Heart right ventricle (tissue), 16 donors: ENCODE measurements at regions of chr19 and their contacts with region 1.

Region 1: DNA sequence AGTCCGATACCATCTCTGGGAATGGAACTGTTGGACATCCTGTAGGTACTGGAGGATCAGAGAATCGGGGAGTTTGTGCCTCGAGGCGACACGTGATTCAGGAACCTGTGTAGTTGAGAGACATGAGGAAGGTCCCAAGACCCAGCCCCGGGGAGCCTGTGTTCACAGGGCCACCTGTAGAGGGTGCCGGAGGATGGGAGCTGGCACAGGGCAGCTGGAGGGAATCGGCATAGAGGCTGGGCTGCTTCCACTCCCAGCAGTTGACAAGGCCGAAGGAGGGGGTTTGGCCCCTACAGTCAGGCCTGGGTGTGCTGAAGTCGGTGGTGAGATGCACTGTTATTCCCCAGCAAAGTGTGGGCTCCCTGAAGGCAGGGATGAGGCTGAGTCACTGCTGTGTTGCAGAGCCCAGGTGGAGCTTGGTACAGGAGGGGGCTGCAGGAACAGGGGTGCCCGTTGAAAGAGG is 2.5 kb upstream of the ISYNA1 start:
- DNase-seq: no peak
- ATAC-seq: no peak
- H3K4me3 ChIP-seq: no peak overlapping the region
- H3K27ac ChIP-seq: peak overlapping the region in 1 of 10 donors; percentile 24
- H3K4me1 ChIP-seq: peaks cover 11 to 37% (median 26%) of the 10 kb centered on the region in 9 donors
- H3K27me3 ChIP-seq: peaks cover 0 to 23% (median 0%) of the 10 kb centered on the region in 7 donors
- CTCF ChIP-seq: peak in 6 of 9 donors; percentile 20 to 48 (median 36)

Region 2: DNA sequence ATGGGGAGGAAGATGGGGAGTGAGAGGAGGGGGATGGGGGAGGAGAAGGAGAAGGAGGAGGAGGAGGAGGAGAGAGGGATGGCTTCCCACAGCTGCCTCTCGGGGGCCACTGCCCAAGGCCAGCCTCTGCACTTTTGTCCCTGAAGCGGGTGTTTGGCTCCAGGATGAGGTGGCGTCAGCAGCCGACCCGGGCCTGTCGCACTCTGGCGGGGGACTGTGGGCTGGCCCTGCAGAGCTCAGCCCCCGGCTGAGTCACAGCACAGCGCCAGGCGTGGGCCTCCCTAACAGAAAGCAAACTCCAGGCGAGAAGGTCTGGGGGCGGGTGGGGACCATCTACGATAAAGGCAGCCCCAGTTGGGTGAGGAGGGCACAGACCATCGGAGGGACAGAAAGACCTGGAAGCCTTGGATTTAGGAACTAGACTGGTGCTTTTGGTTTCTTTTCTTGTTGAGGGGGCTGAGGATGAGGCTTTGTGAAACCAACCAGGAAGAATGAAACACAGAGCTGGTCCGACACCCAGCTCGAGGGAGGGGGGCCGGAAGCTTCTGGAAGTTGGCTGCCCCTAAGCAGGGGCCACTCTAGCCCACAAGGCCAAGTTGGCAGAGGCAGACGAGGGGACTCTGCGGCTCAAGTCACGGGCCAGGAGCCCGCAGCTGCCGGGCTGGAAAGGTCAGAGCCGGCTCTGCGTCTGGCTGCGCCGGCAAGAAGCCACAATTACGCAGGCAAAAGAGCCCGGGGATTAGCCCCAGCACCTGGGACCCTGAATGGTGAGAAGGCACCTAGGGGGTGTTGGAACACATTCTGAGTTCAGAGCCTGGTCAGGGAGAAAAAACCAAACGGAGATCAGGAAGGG is 135.8 kb before region 1 on chr19:
- intact Hi-C with region 1: no loop called
- DNase-seq: peak; percentile 89
- ATAC-seq: peak; percentile 83 to 91 (median 87)
- H3K4me3 ChIP-seq: peak overlapping the region; percentile 6 to 59 (median 47)
- H3K27ac ChIP-seq: peak overlapping the region; percentile 90 to 100 (median 98)
- H3K4me1 ChIP-seq: peaks cover 24 to 74% (median 60%) of the 10 kb centered on the region in 9 donors
- H3K27me3 ChIP-seq: no peaks in the 10 kb centered on the region
- CTCF ChIP-seq: peak in 2 of 9 donors; percentile 26 to 28

Region 3: DNA sequence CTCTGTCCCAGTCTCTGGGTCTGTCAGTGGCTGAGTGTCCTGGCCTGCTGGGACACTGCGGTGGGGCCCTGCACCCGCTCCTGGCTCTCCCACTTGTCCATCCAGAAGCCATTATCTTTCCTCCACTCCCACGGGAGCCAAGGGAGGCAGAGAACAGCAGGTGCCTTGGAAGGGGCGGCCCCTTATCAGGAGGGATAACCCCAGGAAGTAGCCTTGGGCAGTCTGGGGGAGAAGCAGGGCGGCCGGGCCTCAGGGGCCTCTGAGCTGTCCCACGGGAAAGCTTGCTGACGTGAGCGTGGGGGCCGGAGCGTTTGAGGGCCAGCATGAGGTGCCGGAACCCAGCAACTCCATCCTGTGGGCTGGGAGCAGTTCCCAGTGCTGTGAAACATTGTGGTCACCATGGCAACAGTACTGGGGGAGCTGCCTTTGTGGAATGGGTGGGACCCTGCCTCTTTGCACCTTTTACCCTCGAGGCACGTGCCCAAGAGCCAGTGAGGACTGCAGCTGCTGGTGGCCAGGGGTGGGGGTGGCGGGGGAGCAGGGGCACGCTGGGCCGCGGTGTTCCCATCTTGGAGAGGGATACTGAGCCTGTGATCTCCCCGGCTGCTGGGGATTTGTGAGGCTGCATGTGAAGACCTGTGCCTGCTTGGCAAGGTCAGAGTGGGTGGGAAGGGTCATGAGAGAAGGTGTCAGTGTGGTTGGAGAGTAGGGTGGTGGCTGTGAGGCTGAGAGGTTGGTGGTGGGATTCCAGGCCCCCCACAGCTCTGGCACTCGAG is 217.3 kb after region 1 on chr19:
- intact Hi-C with region 1: loop called in 1 of 10 experiments (anchors 10 kb)
- DNase-seq: peak; percentile 77 to 84
- ATAC-seq: peak; percentile 20 to 74 (median 55)
- H3K4me3 ChIP-seq: no peak overlapping the region
- H3K27ac ChIP-seq: peak overlapping the region in 9 of 10 donors; percentile 70 to 90 (median 87)
- H3K4me1 ChIP-seq: peaks cover 17 to 51% (median 46%) of the 10 kb centered on the region in 9 donors
- H3K27me3 ChIP-seq: no peaks in the 10 kb centered on the region
- CTCF ChIP-seq: no peak

Region 4: GRCh38 chr19:18856385-18857126 is 416.1 kb after region 1 on chr19:
- intact Hi-C with region 1: loop called in 1 of 10 experiments (anchors 10 kb)
- DNase-seq: no peak
- ATAC-seq: no peak
- H3K4me3 ChIP-seq: no peak overlapping the region
- H3K27ac ChIP-seq: no peak overlapping the region
- H3K4me1 ChIP-seq: peaks cover 0 to 28% (median 18%) of the 10 kb centered on the region in 9 donors
- H3K27me3 ChIP-seq: no peaks in the 10 kb centered on the region
- CTCF ChIP-seq: peak in 1 of 9 donors; percentile 25